H1 (cell line): ENCODE measurements at regions of chr7 and their contacts with region 1.

Region 1: DNA sequence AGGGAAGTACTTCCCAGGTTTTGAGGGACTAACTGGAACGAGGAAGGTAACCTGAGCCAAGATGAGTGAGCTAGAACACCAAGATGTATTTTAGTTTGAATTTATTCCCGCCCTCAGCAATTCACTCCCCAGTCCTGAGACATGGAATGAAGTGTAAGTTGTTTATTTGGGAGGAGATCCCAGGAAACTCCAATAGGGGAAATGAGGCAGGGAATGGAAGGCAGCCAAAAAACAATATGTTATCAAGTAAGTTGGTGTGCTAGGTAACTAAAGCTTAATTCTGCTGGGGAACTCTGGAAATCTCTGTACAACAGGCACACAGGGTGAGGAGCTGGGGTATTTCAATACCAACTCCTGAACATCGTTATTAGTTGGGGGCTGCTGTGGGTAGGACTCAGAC is 189.7 kb upstream of the HDAC9 start:
- DNase-seq: no peak
- H3K4me3 ChIP-seq: no peak overlapping the region
- H3K27ac ChIP-seq: no peak overlapping the region
- H3K4me1 ChIP-seq: no peaks in the 10 kb centered on the region
- H3K27me3 ChIP-seq: no peaks in the 10 kb centered on the region
- CTCF ChIP-seq: no peak
- EP300 ChIP-seq: no peak
- POLR2A ChIP-seq: no peak
- RAD21 ChIP-seq: no peak

Region 2: GRCh38 chr7:18320971-18321567 is 15.2 kb after region 1 on chr7:
- CTCF ChIA-PET with region 1: interaction called, 10 read pairs
- POLR2A ChIA-PET with region 1: no interaction called
- DNase-seq: no peak
- H3K4me3 ChIP-seq: no peak overlapping the region
- H3K27ac ChIP-seq: no peak overlapping the region
- H3K4me1 ChIP-seq: peaks cover 2 to 8% (median 4%) of the 10 kb centered on the region in 4 experiments; a peak in 4 of 7 replicates
- H3K27me3 ChIP-seq: no peaks in the 10 kb centered on the region
- CTCF ChIP-seq: peak in 1 of 3 experiments; percentile 48; a peak in 2 of 4 replicates
- EP300 ChIP-seq: no peak
- POLR2A ChIP-seq: no peak
- RAD21 ChIP-seq: peak; percentile 56 to 61

Region 3: DNA sequence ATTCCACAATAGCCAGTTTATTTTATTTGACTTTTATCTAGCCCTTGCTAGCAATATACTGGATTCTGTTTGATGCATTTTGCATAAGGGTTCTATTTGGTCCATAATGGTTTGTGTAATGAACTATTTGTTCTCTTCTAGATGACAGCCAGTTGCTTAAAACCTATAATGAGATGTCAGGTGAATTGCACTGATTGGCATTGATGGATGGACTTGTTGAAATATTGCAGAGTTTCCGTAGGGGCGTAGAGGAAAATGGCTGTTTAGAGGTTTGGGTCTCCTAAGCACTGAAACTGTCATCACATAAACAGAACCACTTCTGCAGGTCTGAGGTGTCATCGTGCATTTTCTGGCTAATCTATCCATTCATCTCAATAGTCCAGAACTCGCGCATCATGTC is 64.8 kb after region 1 on chr7:
- CTCF ChIA-PET with region 1: no interaction called
- POLR2A ChIA-PET with region 1: no interaction called
- DNase-seq: no peak
- H3K4me3 ChIP-seq: no peak overlapping the region
- H3K27ac ChIP-seq: no peak overlapping the region
- H3K4me1 ChIP-seq: no peaks in the 10 kb centered on the region; a peak in 1 of 7 replicates
- H3K27me3 ChIP-seq: no peaks in the 10 kb centered on the region
- CTCF ChIP-seq: no peak
- EP300 ChIP-seq: no peak
- POLR2A ChIP-seq: no peak
- RAD21 ChIP-seq: no peak